Activated CD4-positive, alpha-beta T cell treated with anti-CD3 and anti-CD28 coated beads for 36 hours (primary cell): ENCODE measurements at regions of chr10 and their contacts with region 1.

Region 1: GRCh38 chr10:48656241-48656913 is 28.3 kb upstream of the WDFY4 start:
- DNase-seq: peak; percentile 95
- ATAC-seq: peak; percentile 97
- H3K4me3 Mint-ChIP-seq: peak overlapping the region; percentile 67
- H3K27ac Mint-ChIP-seq: peak overlapping the region; percentile 62
- H3K4me1 Mint-ChIP-seq: peaks cover 5% of the 10 kb centered on the region
- H3K27me3 Mint-ChIP-seq: peaks cover 20% of the 10 kb centered on the region

Region 2: GRCh38 chr10:48363617-48364355 is 292.6 kb before region 1 on chr10:
- CTCF ChIA-PET with region 1: interaction called, 18 read pairs
- POLR2A ChIA-PET with region 1: no interaction called
- intact Hi-C with region 1: loop called (anchors 1 kb)
- DNase-seq: peak; percentile 48
- ATAC-seq: peak; percentile 44
- H3K4me3 Mint-ChIP-seq: no peak overlapping the region
- H3K27ac Mint-ChIP-seq: no peak overlapping the region
- H3K4me1 Mint-ChIP-seq: peaks cover 20% of the 10 kb centered on the region
- H3K27me3 Mint-ChIP-seq: no peaks in the 10 kb centered on the region

Region 3: GRCh38 chr10:48551861-48552591 is 104.4 kb before region 1 on chr10:
- CTCF ChIA-PET with region 1: interaction called, 17 read pairs
- POLR2A ChIA-PET with region 1: no interaction called
- intact Hi-C with region 1: loop called (anchors 1 kb)
- DNase-seq: peak; percentile 51
- ATAC-seq: peak; percentile 58
- H3K4me3 Mint-ChIP-seq: no peak overlapping the region
- H3K27ac Mint-ChIP-seq: no peak overlapping the region
- H3K4me1 Mint-ChIP-seq: no peaks in the 10 kb centered on the region
- H3K27me3 Mint-ChIP-seq: no peaks in the 10 kb centered on the region

Region 4: GRCh38 chr10:48981310-48981907 is 325.0 kb after region 1 on chr10:
- CTCF ChIA-PET with region 1: interaction called, 4 read pairs
- POLR2A ChIA-PET with region 1: no interaction called
- intact Hi-C with region 1: loop called in 1 of 2 experiments (anchors 2 kb)
- DNase-seq: peak; percentile 69
- ATAC-seq: peak; percentile 80
- H3K4me3 Mint-ChIP-seq: no peak overlapping the region
- H3K27ac Mint-ChIP-seq: no peak overlapping the region
- H3K4me1 Mint-ChIP-seq: no peaks in the 10 kb centered on the region
- H3K27me3 Mint-ChIP-seq: no peaks in the 10 kb centered on the region

Region 5: GRCh38 chr10:49398000-49398861 is 741.9 kb after region 1 on chr10:
- CTCF ChIA-PET with region 1: no interaction called
- POLR2A ChIA-PET with region 1: no interaction called
- intact Hi-C with region 1: loop called in 1 of 2 experiments (anchors 5 kb)
- DNase-seq: peak; percentile 78
- ATAC-seq: peak; percentile 88
- H3K4me3 Mint-ChIP-seq: no peak overlapping the region
- H3K27ac Mint-ChIP-seq: no peak overlapping the region
- H3K4me1 Mint-ChIP-seq: peaks cover 8% of the 10 kb centered on the region
- H3K27me3 Mint-ChIP-seq: peaks cover 60% of the 10 kb centered on the region

Region 6: DNA sequence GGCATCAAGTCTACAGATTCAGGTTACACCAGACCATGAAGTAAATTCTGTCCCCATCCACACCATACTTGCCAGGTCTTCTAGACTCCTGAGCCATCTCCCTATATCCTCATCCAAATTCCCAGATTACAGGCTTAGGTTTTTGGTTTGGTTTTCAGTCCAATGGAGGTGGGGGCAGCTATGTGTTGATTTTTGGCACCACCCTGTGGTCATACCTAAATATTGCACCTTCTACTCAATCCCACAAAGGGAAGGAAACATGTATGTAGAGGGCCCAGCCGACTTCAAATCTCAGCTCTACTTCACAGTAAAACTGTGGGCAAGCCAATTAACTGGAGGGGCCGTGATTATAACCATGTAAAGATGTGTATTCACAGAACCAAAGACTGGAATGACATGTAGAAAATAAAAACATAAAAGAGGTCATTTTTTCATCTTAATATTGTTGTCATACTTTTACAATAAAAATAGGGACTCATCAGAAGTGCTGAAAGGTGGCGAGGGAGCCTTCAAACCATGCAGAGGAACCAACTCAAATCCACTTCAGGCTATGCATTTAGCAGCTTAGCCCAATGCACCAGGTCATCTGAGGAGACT is 862.7 kb after region 1 on chr10:
- CTCF ChIA-PET with region 1: interaction called, 6 read pairs
- POLR2A ChIA-PET with region 1: no interaction called
- intact Hi-C with region 1: loop called in 1 of 2 experiments (anchors 2 kb)
- DNase-seq: peak; percentile 30
- ATAC-seq: peak; percentile 49
- H3K4me3 Mint-ChIP-seq: no peak overlapping the region
- H3K27ac Mint-ChIP-seq: no peak overlapping the region
- H3K4me1 Mint-ChIP-seq: no peaks in the 10 kb centered on the region
- H3K27me3 Mint-ChIP-seq: no peaks in the 10 kb centered on the region